ENCODE measurements at regions of chr7 and their contacts with region 1.

Region 1: GRCh38 chr7:24956021-24956420 is 24.0 kb downstream of the OSBPL3 start:
- DNase-seq: peak; percentile 88
- H3K4me3 Mint-ChIP-seq: peak overlapping the region; percentile 10
- H3K27ac Mint-ChIP-seq: peak overlapping the region; percentile 65
- H3K4me1 Mint-ChIP-seq: peaks cover 29% of the 10 kb centered on the region
- H3K27me3 Mint-ChIP-seq: no peaks in the 10 kb centered on the region
- CTCF ChIP-seq: no peak

Region 2: DNA sequence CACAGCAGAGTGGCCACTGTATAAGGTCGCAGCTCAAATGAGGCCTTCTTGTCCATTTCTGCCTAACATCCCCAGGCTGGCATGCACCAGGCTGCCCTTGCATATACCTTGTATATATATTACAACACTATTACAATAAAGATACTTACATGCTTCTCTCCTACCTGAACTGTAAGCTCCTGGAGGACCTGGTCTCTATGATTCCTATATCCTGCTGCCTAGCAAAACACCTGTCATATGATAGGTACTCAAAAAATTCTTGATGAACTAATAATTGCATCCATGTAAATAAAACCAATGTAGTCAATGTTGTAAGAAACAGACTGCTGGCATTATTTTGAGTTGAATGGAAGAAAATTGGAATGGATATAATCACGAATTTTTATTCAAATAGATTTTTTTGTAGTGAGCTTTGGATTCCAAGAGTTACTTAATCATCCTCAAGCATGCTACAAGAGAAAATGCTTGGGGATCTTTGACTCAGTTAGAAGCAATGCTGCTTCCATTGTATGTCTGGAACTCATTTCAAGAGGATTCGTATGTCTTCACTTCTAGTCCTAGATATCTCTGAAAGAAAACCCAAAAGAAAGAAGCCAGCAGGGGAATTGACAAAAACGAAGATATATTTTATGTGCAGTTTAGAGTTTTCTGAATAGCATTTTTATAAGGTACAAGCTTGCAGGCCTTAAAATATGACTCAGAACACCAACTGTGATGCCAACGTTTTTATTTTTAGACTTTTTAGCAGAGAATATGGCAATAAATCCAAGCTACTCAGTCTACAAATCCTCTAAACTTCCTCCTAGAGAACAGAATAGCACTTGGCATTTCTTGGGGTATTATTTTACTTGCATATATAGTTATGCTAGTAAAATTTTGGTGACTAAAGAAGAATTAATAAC is 29.1 kb before region 1 on chr7:
- CTCF ChIA-PET with region 1: interaction called, 3 read pairs
- POLR2A ChIA-PET with region 1: interaction called, 11 read pairs
- intact Hi-C with region 1: no loop called
- DNase-seq: no peak
- H3K4me3 Mint-ChIP-seq: peak overlapping the region; percentile 8
- H3K27ac Mint-ChIP-seq: peak overlapping the region; percentile 50
- H3K4me1 Mint-ChIP-seq: peaks cover 38% of the 10 kb centered on the region
- H3K27me3 Mint-ChIP-seq: no peaks in the 10 kb centered on the region
- CTCF ChIP-seq: no peak

Region 3: DNA sequence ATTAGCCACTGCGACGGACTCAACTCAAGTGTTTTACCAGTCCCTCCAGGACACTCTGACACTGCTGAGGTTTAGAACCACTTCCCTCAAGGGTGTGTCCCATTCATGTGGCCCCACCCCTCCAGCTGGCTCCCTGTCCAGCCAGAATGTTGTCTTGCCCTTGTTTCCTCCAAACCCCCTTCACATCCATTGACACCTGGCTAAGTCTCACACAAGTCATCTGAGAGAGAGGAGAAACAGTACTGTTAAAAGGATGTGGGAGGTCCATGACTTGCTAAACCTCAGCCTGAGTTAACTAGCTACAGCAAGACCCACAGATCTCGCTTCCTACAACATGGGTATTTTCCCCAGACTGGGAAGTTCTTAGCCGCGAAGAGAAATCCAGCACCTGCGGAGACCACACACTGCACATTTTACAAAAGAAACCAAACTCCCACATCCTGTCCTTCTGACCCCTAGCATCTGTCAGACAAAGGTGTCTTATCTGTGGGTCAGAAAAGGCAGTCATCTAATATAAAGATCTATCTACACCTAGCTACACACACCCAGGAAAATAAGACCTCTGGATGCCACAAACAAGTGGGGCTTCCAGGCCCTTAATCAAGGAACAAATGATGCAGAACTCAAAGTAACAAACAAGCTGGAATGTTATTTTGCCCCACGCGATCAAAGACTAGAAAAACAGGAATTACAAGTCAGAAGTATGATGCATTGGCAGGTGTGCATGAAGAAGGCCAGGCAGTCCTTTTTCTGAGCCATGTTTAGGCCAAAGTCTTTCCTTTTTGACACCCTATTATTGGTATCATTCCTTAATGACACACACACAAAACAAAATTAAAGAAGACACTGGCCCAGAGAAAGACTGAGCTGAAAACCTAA is 10.0 kb after region 1 on chr7:
- CTCF ChIA-PET with region 1: interaction called, 3 read pairs
- POLR2A ChIA-PET with region 1: interaction called, 12 read pairs
- intact Hi-C with region 1: loop called (anchors 1 kb)
- DNase-seq: no peak
- H3K4me3 Mint-ChIP-seq: no peak overlapping the region
- H3K27ac Mint-ChIP-seq: peak overlapping the region; percentile 17
- H3K4me1 Mint-ChIP-seq: peaks cover 51% of the 10 kb centered on the region
- H3K27me3 Mint-ChIP-seq: no peaks in the 10 kb centered on the region
- CTCF ChIP-seq: no peak

Measured in MCF 10A (cell line).